CD14-positive monocyte (primary cell): ENCODE measurements at regions of chr16 and their contacts with region 1.

Region 1: GRCh38 chr16:30091474-30092372 is at the start of gene TBX6:
- DNase-seq: peak; percentile 90 to 93 (median 93)
- H3K4me3 ChIP-seq: peak within 1 kb of the TSS; percentile 40 to 88 (median 62)
- H3K4me3 Mint-ChIP-seq: peak within 1 kb of the TSS; percentile 83 to 92
- H3K27ac ChIP-seq: peak within 1 kb of the TSS; percentile 81 to 87
- H3K27ac Mint-ChIP-seq: peak within 1 kb of the TSS; percentile 86 to 97 (median 96)
- H3K4me1 ChIP-seq: peaks cover 77 to 95% of the 10 kb centered on the region in 2 donors
- H3K4me1 Mint-ChIP-seq: peaks cover 77% of the 10 kb centered on the region
- H3K27me3 ChIP-seq: no peaks in the 10 kb centered on the region
- H3K27me3 Mint-ChIP-seq: peaks cover 0 to 5% (median under 1%) of the 10 kb centered on the region in 3 donors
- CTCF ChIP-seq: no peak
- polyA plus RNA-seq, gene TBX6: 0.10 to 0.65 (median 0.11) TPM

Region 2: GRCh38 chr16:30075507-30076275 is 16.0 kb before region 1 on chr16 and contains the start of gene PPP4C:
- intact Hi-C with region 1: loop called in 1 of 2 experiments (anchors 2 kb)
- DNase-seq: peak; percentile 86 to 92 (median 87)
- H3K4me3 ChIP-seq: peak within 1 kb of the TSS; percentile 69 to 93 (median 83)
- H3K4me3 Mint-ChIP-seq: peak within 1 kb of the TSS; percentile 90
- H3K27ac ChIP-seq: peak within 1 kb of the TSS; percentile 83 to 92
- H3K27ac Mint-ChIP-seq: peak within 1 kb of the TSS; percentile 91 to 96 (median 96)
- H3K4me1 ChIP-seq: peaks cover 24 to 39% of the 10 kb centered on the region in 2 donors
- H3K4me1 Mint-ChIP-seq: peaks cover 31% of the 10 kb centered on the region
- H3K27me3 ChIP-seq: no peaks in the 10 kb centered on the region
- H3K27me3 Mint-ChIP-seq: no peaks in the 10 kb centered on the region
- CTCF ChIP-seq: no peak
- polyA plus RNA-seq, gene PPP4C: 186 to 388 (median 279) TPM

Region 3: DNA sequence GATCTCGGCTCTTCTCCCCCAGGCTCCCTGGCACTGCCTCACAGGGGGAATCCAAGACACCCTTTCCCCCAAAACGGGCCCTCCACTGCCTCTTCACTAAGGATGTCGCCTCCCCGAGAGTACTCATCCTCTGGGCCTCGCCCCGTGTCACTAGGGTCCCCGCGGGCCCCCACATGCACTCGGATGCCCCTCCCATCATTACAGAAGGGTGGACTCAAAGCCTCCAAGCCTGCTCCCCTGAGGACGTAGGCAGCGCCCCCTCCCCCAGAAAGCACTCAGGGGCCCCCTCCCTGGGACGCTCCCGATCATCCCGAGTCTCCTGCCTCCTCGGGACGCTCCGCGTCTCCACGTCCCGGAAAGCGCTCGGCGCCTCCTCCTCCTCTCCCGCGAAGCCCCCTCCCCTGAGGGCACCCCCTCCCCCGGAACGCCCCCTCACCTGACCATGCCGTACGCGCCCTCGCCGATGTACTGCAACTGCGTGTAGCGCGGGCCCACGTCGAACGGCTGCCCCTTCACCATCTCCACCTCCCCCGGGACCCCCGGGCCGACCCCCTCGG is 31.0 kb after region 1 on chr16:
- intact Hi-C with region 1: loop called in 1 of 2 experiments (anchors 2 kb)
- DNase-seq: no peak
- H3K4me3 ChIP-seq: peak overlapping the region; percentile 76 to 91 (median 80)
- H3K4me3 Mint-ChIP-seq: peak overlapping the region; percentile 91 to 96
- H3K27ac ChIP-seq: peak overlapping the region; percentile 38 to 66
- H3K27ac Mint-ChIP-seq: peak overlapping the region; percentile 28 to 93 (median 79)
- H3K4me1 ChIP-seq: peaks cover 28 to 29% of the 10 kb centered on the region in 2 donors
- H3K4me1 Mint-ChIP-seq: peaks cover 24% of the 10 kb centered on the region
- H3K27me3 ChIP-seq: no peaks in the 10 kb centered on the region
- H3K27me3 Mint-ChIP-seq: peaks cover 0 to 4% (median 0%) of the 10 kb centered on the region in 3 donors
- CTCF ChIP-seq: no peak